Activated B cell treated with CpG ODN at 0.5 μM for 24 hours (primary cell): ENCODE measurements at regions of chr11 and their contacts with region 1.

Region 1: DNA sequence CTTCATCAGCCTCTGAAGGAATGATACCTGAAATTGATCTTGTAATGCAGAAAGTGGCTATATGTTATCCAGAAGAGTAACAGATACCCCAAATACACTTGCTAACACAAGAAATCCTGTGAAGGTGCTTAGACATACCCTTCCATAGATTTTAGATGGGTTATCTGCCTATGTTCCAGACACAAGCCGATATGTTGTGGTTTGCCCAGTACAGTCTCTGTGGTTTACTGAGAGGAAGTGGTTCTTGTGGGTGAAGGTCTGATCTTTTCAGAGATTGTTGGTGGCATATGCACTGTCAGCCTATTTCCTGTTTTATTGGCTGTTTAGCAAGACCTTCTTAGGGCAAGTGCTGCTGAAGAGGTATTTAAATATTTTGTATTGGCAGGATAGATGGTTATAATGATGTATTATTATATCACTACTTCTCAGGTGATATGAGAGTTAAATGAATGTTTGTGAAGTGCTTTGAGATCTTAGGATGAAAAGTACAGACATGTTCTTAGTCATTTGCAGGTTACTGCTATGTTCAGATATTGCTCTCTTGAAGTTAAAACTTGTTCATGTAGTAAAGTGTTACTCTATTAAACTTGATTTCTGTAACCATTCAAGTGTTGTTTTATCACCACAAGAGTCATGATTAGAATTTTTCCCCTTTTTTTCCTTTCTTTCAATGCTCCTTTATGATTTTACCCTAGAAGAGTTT is 8.2 kb downstream of the ARHGEF12 start:
- DNase-seq: no peak
- ATAC-seq: peak; percentile 82
- H3K4me3 Mint-ChIP-seq: peak overlapping the region; percentile 21
- H3K27ac Mint-ChIP-seq: peak overlapping the region; percentile 30
- H3K4me1 Mint-ChIP-seq: peaks cover 41% of the 10 kb centered on the region
- H3K27me3 Mint-ChIP-seq: peaks cover 48% of the 10 kb centered on the region
- CTCF ChIP-seq: no peak

Region 2: GRCh38 chr11:119759324-119759723 is 585.1 kb before region 1 on chr11:
- CTCF ChIA-PET with region 1: no interaction called
- POLR2A ChIA-PET with region 1: no interaction called
- intact Hi-C with region 1: loop called (anchors 10 kb)
- DNase-seq: no peak
- ATAC-seq: no peak
- H3K4me3 Mint-ChIP-seq: no peak overlapping the region
- H3K27ac Mint-ChIP-seq: no peak overlapping the region
- H3K4me1 Mint-ChIP-seq: no peaks in the 10 kb centered on the region
- H3K27me3 Mint-ChIP-seq: peaks cover 11% of the 10 kb centered on the region
- CTCF ChIP-seq: no peak

Region 3: DNA sequence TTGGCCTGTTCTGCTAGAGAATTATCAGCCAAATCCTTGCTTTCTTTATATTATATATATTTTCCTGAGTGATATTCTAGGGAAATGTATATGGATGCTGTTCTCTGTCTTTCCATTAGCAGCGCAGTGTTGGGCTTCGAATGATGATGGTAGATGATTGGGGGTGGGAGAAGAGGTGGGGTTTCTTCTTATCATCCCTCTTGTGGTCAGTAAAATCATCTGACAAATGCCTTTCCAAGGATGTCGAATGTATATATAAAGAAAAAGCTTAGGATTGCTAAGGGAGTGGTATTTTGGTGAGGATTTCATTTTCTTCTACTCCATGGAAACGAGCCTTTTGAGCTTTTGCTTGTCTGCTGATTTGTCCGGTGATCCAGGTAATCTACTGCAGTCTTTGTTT is 40.7 kb after region 1 on chr11:
- CTCF ChIA-PET with region 1: no interaction called
- POLR2A ChIA-PET with region 1: no interaction called
- intact Hi-C with region 1: loop called (anchors 5 kb)
- DNase-seq: no peak
- ATAC-seq: no peak
- H3K4me3 Mint-ChIP-seq: no peak overlapping the region
- H3K27ac Mint-ChIP-seq: no peak overlapping the region
- H3K4me1 Mint-ChIP-seq: peaks cover 8% of the 10 kb centered on the region
- H3K27me3 Mint-ChIP-seq: no peaks in the 10 kb centered on the region
- CTCF ChIP-seq: no peak

Region 4: GRCh38 chr11:120400564-120401364 is 56.3 kb after region 1 on chr11:
- CTCF ChIA-PET with region 1: no interaction called
- POLR2A ChIA-PET with region 1: no interaction called
- intact Hi-C with region 1: no loop called
- DNase-seq: no peak
- ATAC-seq: no peak
- H3K4me3 Mint-ChIP-seq: no peak overlapping the region
- H3K27ac Mint-ChIP-seq: no peak overlapping the region
- H3K4me1 Mint-ChIP-seq: peaks cover 9% of the 10 kb centered on the region
- H3K27me3 Mint-ChIP-seq: no peaks in the 10 kb centered on the region
- CTCF ChIP-seq: no peak

Region 5: GRCh38 chr11:120622189-120622875 is 277.9 kb after region 1 on chr11:
- CTCF ChIA-PET with region 1: no interaction called
- POLR2A ChIA-PET with region 1: no interaction called
- intact Hi-C with region 1: no loop called
- DNase-seq: no peak
- ATAC-seq: no peak
- H3K4me3 Mint-ChIP-seq: no peak overlapping the region
- H3K27ac Mint-ChIP-seq: no peak overlapping the region
- H3K4me1 Mint-ChIP-seq: no peaks in the 10 kb centered on the region
- H3K27me3 Mint-ChIP-seq: peaks cover 10% of the 10 kb centered on the region
- CTCF ChIP-seq: no peak

Region 6: DNA sequence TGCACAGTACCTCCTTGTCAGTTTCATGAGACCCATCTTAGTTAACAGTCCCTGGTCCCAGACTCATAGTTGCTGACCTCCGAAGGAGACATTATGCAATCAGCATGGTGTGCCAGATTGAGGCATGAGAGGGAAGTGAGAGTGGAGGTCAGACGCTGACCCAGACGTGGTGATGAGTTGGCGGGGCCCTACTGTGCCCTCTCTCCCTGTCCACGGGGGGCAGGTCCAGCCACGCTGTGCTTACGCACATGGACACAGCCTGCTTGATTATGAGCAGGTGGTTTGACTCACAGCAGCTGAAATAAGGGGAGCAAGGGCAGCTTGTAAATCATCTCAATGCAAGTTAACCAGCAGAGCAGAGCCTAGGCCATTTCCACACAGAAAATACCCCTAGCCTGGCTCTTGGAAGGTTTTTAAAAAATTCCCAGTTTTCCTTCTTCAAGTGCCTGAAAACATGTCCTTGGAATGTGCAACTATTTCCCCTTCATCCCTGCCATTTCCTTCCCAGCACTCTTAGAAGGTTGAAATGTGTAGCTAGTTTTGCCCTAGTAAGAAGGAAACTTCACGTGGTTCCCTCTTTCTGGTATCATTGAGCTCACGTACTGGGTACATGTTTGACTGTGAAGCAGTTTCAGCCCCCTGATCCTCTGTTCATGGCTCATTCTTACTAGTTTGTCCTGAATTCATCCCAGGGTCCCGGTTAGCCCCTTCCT is 1231.0 kb after region 1 on chr11:
- CTCF ChIA-PET with region 1: no interaction called
- POLR2A ChIA-PET with region 1: no interaction called
- intact Hi-C with region 1: loop called (anchors 10 kb)
- DNase-seq: no peak
- ATAC-seq: peak; percentile 78
- H3K4me3 Mint-ChIP-seq: peak overlapping the region; percentile 50
- H3K27ac Mint-ChIP-seq: peak overlapping the region; percentile 87
- H3K4me1 Mint-ChIP-seq: peaks cover 42% of the 10 kb centered on the region
- H3K27me3 Mint-ChIP-seq: peaks cover 4% of the 10 kb centered on the region
- CTCF ChIP-seq: no peak